Naive thymus-derived CD4-positive, alpha-beta T cell (primary cell): ENCODE measurements at regions of chr9 and their contacts with region 1.

Region 1: GRCh38 chr9:129110740-129111527 is at the starts of genes CRAT and PTPA:
- DNase-seq: peak; percentile 85 to 96 (median 89)
- ATAC-seq: peak; percentile 93
- H3K4me3 ChIP-seq: peak within 1 kb of the TSS; percentile 82
- H3K4me3 Mint-ChIP-seq: peak within 1 kb of the TSS; percentile 88 to 97 (median 92)
- H3K27ac ChIP-seq: peak within 1 kb of the TSS; percentile 87
- H3K27ac Mint-ChIP-seq: peak within 1 kb of the TSS; percentile 83 to 97 (median 94)
- H3K4me1 ChIP-seq: peaks cover 10% of the 10 kb centered on the region in 2 donors
- H3K4me1 Mint-ChIP-seq: peaks cover 26 to 45% (median 29%) of the 10 kb centered on the region in 7 donors
- H3K27me3 ChIP-seq: no peaks in the 10 kb centered on the region
- H3K27me3 Mint-ChIP-seq: no peaks in the 10 kb centered on the region
- total RNA-seq, gene CRAT: 7.2 to 15.6 (median 11.4) TPM
- total RNA-seq, gene PTPA: 45.0 to 110 (median 52.3) TPM

Region 2: DNA sequence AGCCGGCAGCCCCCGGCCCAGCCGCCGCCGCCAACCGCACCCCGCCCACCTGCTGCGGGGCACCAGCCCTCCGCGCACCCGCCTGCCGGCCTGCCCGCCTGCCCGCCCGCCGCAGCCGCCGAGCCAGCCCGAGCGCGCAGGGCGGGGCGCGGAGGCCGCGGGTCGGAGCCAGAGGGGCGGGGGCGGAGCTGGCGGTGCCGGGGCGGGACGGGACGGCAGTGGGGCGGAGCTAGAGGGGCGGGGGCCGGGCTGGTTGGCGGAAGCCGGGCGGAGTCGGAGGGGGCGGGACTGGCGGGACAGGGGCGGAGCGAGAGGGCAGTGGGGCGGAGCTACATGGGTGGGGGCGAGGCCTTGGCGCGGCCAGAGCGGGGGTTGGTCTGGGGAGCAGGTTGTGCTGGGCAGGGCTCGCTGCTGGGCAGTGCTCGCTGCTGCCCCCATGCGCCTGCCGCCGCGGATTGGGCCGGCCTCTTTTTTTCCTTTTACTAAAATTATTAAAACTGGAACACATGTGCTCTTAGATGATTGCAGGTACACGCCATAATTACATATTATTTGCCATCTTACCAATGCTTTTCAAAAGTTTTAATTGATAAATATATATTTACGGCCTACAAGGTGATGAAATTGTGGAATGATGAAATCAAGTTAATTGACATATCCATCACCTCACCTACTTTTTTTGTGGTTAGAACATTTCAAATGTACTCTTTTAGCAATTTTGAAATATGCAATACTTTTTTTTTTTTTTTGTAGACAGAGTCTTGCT is 82.6 kb before region 1 on chr9 and contains the start of gene SH3GLB2:
- CTCF ChIA-PET with region 1: no interaction called
- POLR2A ChIA-PET with region 1: interaction called, 6 read pairs
- intact Hi-C with region 1: loop called (anchors 1 kb)
- DNase-seq: peak in 8 of 9 donors; percentile 81 to 97 (median 88)
- ATAC-seq: peak; percentile 94
- H3K4me3 ChIP-seq: peak within 1 kb of the TSS; percentile 76
- H3K4me3 Mint-ChIP-seq: peak within 1 kb of the TSS; percentile 81 to 92 (median 83)
- H3K27ac ChIP-seq: peak within 1 kb of the TSS; percentile 72
- H3K27ac Mint-ChIP-seq: peak within 1 kb of the TSS; percentile 62 to 90 (median 78)
- H3K4me1 ChIP-seq: peaks cover 13 to 18% of the 10 kb centered on the region in 2 donors
- H3K4me1 Mint-ChIP-seq: peaks cover 13 to 37% (median 25%) of the 10 kb centered on the region in 7 donors
- H3K27me3 ChIP-seq: no peaks in the 10 kb centered on the region
- H3K27me3 Mint-ChIP-seq: no peaks in the 10 kb centered on the region
- total RNA-seq, gene SH3GLB2: 76.3 to 106 (median 86.2) TPM

Region 3: GRCh38 chr9:129036241-129036922 is 74.6 kb before region 1 on chr9 and contains the start of gene MIGA2:
- CTCF ChIA-PET with region 1: no interaction called
- POLR2A ChIA-PET with region 1: no interaction called
- intact Hi-C with region 1: loop called (anchors 1 kb)
- DNase-seq: peak; percentile 78 to 93 (median 90)
- ATAC-seq: peak; percentile 99
- H3K4me3 ChIP-seq: peak within 1 kb of the TSS; percentile 87
- H3K4me3 Mint-ChIP-seq: peak within 1 kb of the TSS; percentile 90 to 99 (median 94)
- H3K27ac ChIP-seq: peak within 1 kb of the TSS; percentile 72
- H3K27ac Mint-ChIP-seq: peak within 1 kb of the TSS; percentile 56 to 93 (median 87)
- H3K4me1 ChIP-seq: peaks cover 13 to 17% of the 10 kb centered on the region in 2 donors
- H3K4me1 Mint-ChIP-seq: peaks cover 22 to 41% (median 37%) of the 10 kb centered on the region in 7 donors
- H3K27me3 ChIP-seq: no peaks in the 10 kb centered on the region
- H3K27me3 Mint-ChIP-seq: no peaks in the 10 kb centered on the region
- total RNA-seq, gene MIGA2: 50.0 to 73.4 (median 60.7) TPM

Region 4: GRCh38 chr9:129131300-129132145 is 20.6 kb after region 1 on chr9:
- CTCF ChIA-PET with region 1: interaction called, 7 read pairs
- POLR2A ChIA-PET with region 1: interaction called, 3 read pairs
- intact Hi-C with region 1: loop called in 1 of 2 experiments (anchors 1 kb)
- DNase-seq: peak; percentile 71 to 90 (median 81)
- ATAC-seq: peak; percentile 100
- H3K4me3 ChIP-seq: no peak overlapping the region
- H3K4me3 Mint-ChIP-seq: peak overlapping the region in 2 of 10 donors; percentile 10 to 23
- H3K27ac ChIP-seq: peak overlapping the region; percentile 24
- H3K27ac Mint-ChIP-seq: peak overlapping the region in 6 of 9 donors; percentile 11 to 54 (median 46)
- H3K4me1 ChIP-seq: no peaks in the 10 kb centered on the region
- H3K4me1 Mint-ChIP-seq: peaks cover 0 to 9% (median 6%) of the 10 kb centered on the region in 7 donors
- H3K27me3 ChIP-seq: no peaks in the 10 kb centered on the region
- H3K27me3 Mint-ChIP-seq: no peaks in the 10 kb centered on the region

Region 5: DNA sequence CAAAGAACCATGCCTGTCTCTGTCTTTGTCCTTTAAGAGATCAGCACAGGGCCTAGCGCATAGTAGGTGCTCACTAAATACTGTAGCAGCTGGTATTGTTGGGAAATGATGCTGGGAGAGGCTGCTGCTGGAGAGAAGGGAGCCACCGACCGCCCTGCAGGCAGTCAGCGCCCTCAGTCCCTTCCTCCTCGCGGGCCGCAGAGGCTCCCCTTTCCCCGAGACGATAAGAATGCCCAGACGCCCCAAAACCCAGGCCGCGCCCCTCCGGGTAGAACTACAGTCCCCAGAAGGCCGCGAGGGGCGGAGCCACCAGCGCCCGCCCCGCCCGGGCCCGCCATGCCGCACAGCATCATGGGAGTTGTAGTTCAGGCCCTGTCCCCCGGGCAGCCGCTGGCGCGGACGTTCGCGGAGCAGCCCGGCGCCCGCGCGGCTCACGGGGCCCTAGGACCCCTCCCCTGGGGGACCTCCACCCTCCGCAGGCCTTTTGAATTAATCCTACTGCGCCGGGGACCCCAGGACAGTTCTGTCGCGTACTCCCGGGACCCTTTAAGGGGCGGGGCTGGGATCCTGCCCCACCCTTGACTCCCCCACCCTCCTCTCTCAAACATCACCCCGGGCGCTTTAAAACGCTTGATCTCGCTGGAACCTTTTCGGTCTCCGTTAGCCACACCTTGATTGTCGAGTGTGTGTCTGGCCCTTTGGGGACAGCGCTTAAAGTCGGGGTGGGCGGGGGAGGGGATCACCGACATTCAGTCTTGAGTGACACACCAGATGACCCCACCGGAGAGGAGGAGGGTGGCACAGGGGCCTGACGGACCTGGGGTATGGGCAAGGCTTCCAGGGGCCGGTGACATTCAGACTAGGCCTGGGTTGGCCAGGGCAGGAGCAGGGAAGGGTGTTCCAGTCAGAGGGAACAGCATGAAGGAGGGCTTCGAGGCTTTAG is 92.0 kb after region 1 on chr9:
- CTCF ChIA-PET with region 1: no interaction called
- POLR2A ChIA-PET with region 1: no interaction called
- intact Hi-C with region 1: loop called in 1 of 2 experiments (anchors 1 kb)
- DNase-seq: peak; percentile 84 to 96 (median 92)
- ATAC-seq: peak; percentile 99
- H3K4me3 ChIP-seq: peak overlapping the region; percentile 77
- H3K4me3 Mint-ChIP-seq: peak overlapping the region; percentile 64 to 82 (median 74)
- H3K27ac ChIP-seq: peak overlapping the region; percentile 83
- H3K27ac Mint-ChIP-seq: peak overlapping the region in 8 of 9 donors; percentile 64 to 91 (median 84)
- H3K4me1 ChIP-seq: peaks cover 21 to 23% of the 10 kb centered on the region in 2 donors
- H3K4me1 Mint-ChIP-seq: peaks cover 13 to 26% (median 20%) of the 10 kb centered on the region in 7 donors
- H3K27me3 ChIP-seq: no peaks in the 10 kb centered on the region
- H3K27me3 Mint-ChIP-seq: peaks cover 0 to 11% (median 0%) of the 10 kb centered on the region in 5 donors